Ascending aorta (tissue), 2 donors: ENCODE measurements at regions of chr2 and their contacts with region 1.

Region 1: DNA sequence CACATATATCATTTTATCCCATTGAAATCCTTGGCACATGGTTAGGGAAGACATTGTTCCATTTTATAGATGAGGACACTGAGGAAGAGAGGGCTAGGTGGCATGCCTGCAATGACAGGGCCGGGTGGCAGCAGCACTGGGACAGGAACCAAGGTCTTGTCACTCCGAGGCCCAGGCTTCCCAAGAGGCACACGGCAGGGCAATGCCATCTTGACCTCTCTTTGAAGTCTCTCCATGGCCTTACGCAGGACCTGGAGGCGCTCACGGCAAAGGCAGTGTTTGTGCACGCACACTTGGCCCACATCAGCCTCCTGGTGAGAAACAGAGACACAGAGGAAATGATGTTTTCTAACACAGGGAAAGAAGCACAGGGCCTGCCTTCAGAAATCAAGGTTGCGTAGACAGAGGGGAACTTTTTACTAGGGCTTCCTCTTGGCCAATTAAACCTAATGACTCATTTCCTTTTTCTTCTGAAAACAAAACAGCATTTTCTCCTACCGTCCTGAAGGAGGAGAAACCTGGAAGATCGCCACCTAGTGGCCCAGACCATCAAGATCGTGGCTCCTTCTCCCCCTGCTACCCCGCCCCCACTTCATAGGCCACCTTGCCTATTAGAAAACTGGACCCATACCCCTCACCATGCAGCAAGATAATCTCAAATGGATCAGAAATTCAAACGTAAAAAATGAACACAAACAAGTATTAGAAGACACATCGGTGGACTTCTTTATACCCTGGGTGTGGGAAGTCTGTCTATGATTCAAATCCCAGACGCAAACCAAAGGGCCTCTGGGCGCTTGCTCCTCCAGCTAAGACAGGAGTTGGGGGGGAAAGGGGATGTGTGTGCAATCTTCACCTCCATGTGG is 74.6 kb upstream of the SP3 start:
- DNase-seq: peak; percentile 54 to 94
- H3K4me3 ChIP-seq: peak overlapping the region in 1 of 2 donors; percentile 26
- H3K27ac ChIP-seq: peak overlapping the region; percentile 67 to 83
- H3K4me1 ChIP-seq: peaks cover 9 to 24% of the 10 kb centered on the region in 2 donors
- H3K27me3 ChIP-seq: no peaks in the 10 kb centered on the region
- CTCF ChIP-seq: peak; percentile 76 to 90 (median 81)

Region 2: DNA sequence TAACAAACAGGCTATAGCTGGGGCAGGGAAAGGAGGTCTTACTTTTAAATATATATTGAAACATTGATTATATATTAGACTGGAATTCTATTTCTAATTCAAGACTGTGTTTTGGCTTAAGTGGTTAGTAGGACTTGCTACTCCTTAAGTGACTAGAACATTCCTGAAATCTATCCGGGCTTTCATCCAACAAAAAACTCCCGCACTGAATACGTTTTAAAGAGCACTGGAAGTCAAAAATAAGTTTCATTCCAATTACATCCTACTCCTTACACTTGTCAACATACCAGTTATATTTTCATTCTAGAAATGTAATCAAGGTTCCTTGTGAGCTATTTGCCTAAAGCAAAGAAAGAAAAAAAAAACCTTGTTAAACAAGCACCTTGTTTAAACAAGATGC is 279.2 kb before region 1 on chr2:
- intact Hi-C with region 1: loop called (anchors 10 kb)
- DNase-seq: no peak
- H3K4me3 ChIP-seq: no peak overlapping the region
- H3K27ac ChIP-seq: peak overlapping the region in 1 of 2 donors; percentile 33
- H3K4me1 ChIP-seq: peaks cover 0 to 3% of the 10 kb centered on the region in 2 donors
- H3K27me3 ChIP-seq: no peaks in the 10 kb centered on the region
- CTCF ChIP-seq: no peak

Region 3: DNA sequence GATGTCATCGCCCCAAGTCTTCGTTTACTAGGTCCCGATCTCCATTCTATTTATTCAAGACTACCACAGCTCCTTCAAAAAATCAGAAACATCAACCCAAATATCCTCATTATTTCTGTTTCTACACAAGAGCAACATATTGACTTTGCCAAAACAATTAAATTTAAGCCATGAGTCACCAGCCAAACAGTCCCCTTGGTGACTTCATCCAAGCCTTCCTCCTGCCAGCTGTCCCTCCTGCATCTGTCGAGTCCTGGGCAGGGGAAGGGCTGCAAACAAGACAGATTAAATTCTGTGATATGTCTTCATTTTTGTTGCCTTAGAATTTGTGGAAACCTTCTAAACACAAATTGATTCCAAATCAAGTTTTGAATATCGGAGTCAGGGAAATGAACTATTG is 184.9 kb before region 1 on chr2:
- intact Hi-C with region 1: loop called (anchors 1 kb)
- DNase-seq: peak in 1 of 2 donors; percentile 79
- H3K4me3 ChIP-seq: peak overlapping the region in 1 of 2 donors; percentile 14
- H3K27ac ChIP-seq: peak overlapping the region; percentile 59 to 77
- H3K4me1 ChIP-seq: peaks cover 0 to 31% of the 10 kb centered on the region in 2 donors
- H3K27me3 ChIP-seq: no peaks in the 10 kb centered on the region
- CTCF ChIP-seq: no peak

Region 4: DNA sequence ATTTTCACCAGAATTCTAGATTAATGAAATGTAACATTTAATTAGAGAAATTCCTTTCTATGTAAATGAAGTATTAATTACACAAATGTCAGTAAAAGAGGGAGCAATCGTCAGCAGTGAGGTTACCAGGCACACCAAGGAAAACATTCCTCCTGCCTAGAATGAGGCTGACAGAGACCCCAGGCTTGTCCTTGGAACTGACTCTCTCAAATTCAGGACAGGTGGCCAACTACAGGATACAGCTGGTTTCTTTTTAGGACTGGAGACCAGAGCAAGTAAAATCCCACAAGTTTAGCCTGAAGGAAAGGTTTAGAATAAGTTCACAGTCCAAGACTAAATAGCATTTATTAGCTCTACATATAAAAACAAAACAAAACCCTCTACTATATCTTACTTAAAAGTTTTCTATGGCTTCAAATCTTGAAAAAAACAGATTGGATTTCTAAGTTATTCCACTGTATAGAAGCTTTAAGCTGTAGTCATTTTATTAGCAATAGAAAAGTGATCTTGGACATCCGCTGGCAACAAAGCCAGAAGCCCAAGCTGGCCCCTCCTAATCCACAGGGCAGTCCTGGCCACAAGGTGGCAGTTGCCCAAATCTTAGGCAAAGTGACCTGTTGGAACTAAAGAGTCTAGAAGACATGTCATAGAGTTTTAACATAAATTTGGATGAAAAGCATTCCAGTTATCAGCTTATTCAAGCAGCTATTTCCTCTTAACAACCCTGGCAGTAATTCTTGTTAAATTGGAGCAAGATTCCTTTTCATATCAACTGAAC is 155.6 kb before region 1 on chr2:
- intact Hi-C with region 1: loop called (anchors 2 kb)
- DNase-seq: no peak
- H3K4me3 ChIP-seq: no peak overlapping the region
- H3K27ac ChIP-seq: no peak overlapping the region
- H3K4me1 ChIP-seq: no peaks in the 10 kb centered on the region
- H3K27me3 ChIP-seq: no peaks in the 10 kb centered on the region
- CTCF ChIP-seq: peak; percentile 43 to 60 (median 48)

Region 5: GRCh38 chr2:173990970-173991819 is 48.6 kb before region 1 on chr2:
- intact Hi-C with region 1: loop called (anchors 2 kb)
- DNase-seq: peak; percentile 25 to 92
- H3K4me3 ChIP-seq: peak overlapping the region; percentile 27 to 28
- H3K27ac ChIP-seq: peak overlapping the region; percentile 76 to 83
- H3K4me1 ChIP-seq: peaks cover 18 to 59% of the 10 kb centered on the region in 2 donors
- H3K27me3 ChIP-seq: no peaks in the 10 kb centered on the region
- CTCF ChIP-seq: no peak

Region 6: GRCh38 chr2:174012347-174013314 is 27.2 kb before region 1 on chr2:
- intact Hi-C with region 1: loop called (anchors 2 kb)
- DNase-seq: peak in 1 of 2 donors; percentile 82
- H3K4me3 ChIP-seq: peak overlapping the region; percentile 53 to 66
- H3K27ac ChIP-seq: peak overlapping the region; percentile 94 to 96
- H3K4me1 ChIP-seq: peaks cover 3 to 36% of the 10 kb centered on the region in 2 donors
- H3K27me3 ChIP-seq: no peaks in the 10 kb centered on the region
- CTCF ChIP-seq: no peak

Region 7: DNA sequence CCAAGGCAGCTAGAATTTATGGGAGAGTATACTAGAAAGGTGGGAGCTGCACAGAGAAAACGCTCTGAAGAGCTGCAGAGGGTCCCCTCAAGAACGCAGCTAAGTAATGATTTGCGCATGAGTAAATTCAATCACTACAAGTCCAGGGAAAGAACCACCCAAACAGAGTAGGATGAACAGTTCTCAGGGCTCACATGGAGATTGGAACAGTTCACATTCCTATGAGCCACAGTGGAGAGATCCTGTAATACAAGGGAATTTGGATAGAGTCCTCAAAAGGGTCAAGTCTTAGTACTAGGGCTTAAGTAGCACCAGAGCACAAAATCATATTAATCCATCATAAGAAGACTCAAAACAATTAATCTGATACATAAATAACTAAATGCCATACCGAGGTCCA is 195.9 kb after region 1 on chr2:
- intact Hi-C with region 1: no loop called
- DNase-seq: no peak
- H3K4me3 ChIP-seq: no peak overlapping the region
- H3K27ac ChIP-seq: no peak overlapping the region
- H3K4me1 ChIP-seq: no peaks in the 10 kb centered on the region
- H3K27me3 ChIP-seq: no peaks in the 10 kb centered on the region
- CTCF ChIP-seq: no peak

Region 8: GRCh38 chr2:174248187-174248997 is 208.6 kb after region 1 on chr2 and contains the start of gene OLA1:
- intact Hi-C with region 1: loop called (anchors 5 kb)
- DNase-seq: peak; percentile 75 to 96
- H3K4me3 ChIP-seq: peak within 1 kb of the TSS; percentile 77 to 91
- H3K27ac ChIP-seq: peak within 1 kb of the TSS; percentile 68 to 91
- H3K4me1 ChIP-seq: peaks cover 5 to 6% of the 10 kb centered on the region in 2 donors
- H3K27me3 ChIP-seq: no peaks in the 10 kb centered on the region
- CTCF ChIP-seq: peak in 1 of 3 experiments; percentile 3
- total RNA-seq, gene OLA1: 29.5 TPM